Mammary epithelial cell (primary cell): ENCODE measurements at regions of chr3 and their contacts with region 1.

Region 1: GRCh38 chr3:84547971-84548970 is 410.5 kb upstream of the CADM2 start:
- DNase-seq: peak; percentile 16
- H3K4me3 ChIP-seq: no peak overlapping the region
- H3K27ac ChIP-seq: no peak overlapping the region
- H3K4me1 ChIP-seq: no peaks in the 10 kb centered on the region
- H3K27me3 ChIP-seq: no peaks in the 10 kb centered on the region
- CTCF ChIP-seq: peak; percentile 44 to 58

Region 2: DNA sequence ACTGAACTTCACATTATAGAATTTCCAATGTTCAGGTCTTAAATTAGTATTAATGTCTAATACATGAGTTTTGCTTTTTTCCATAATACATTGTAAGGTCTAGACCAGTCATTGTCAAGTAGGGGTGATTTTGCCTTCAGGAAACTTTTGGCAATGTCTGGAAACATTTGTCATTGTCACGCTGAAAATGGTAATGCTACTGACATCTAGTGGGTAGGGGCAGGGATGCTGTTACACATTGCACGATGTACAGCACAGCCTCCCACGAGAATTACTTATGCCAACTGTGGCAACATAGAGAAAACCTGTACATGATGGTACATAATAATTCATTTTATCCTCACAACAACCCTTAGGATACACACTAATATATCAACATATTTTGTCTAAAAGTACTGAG is 794.6 kb after region 1 on chr3:
- CTCF ChIA-PET with region 1: no interaction called
- dilution Hi-C with region 1: no loop called
- in situ Hi-C with region 1: no loop called
- intact Hi-C with region 1: loop called (anchors 5 kb)
- DNase-seq: no peak
- H3K4me3 ChIP-seq: no peak overlapping the region
- H3K27ac ChIP-seq: no peak overlapping the region
- H3K4me1 ChIP-seq: no peaks in the 10 kb centered on the region
- H3K27me3 ChIP-seq: no peaks in the 10 kb centered on the region
- CTCF ChIP-seq: peak; percentile 21 to 46